GM12878 (cell line): ENCODE measurements at regions of chr10 and their contacts with region 1.

Region 1: GRCh38 chr10:70925377-70926225 is 37.2 kb upstream of the PCBD1 start:
- DNase-seq: no peak
- ATAC-seq: peak; percentile 92
- H3K4me3 ChIP-seq: no peak overlapping the region
- H3K27ac ChIP-seq: no peak overlapping the region
- H3K4me1 ChIP-seq: no peaks in the 10 kb centered on the region
- H3K27me3 ChIP-seq: no peaks in the 10 kb centered on the region; a peak in 3 of 4 replicates
- CTCF ChIP-seq: peak; percentile 86 to 95 (median 95); a peak in 5 of 6 replicates
- EP300 ChIP-seq: no peak
- POLR2A ChIP-seq: no peak
- RAD21 ChIP-seq: peak; percentile 88

Region 2: GRCh38 chr10:69715156-69715898 is 1210.3 kb before region 1 on chr10:
- CTCF ChIA-PET with region 1: no interaction called
- POLR2A ChIA-PET with region 1: no interaction called
- RAD21 ChIA-PET with region 1: no interaction called
- SMC1A ChIA-PET with region 1: no interaction called
- in situ Hi-C with region 1: no loop called
- intact Hi-C with region 1: no loop called
- DNase-seq: no peak
- ATAC-seq: no peak
- H3K4me3 ChIP-seq: no peak overlapping the region
- H3K27ac ChIP-seq: no peak overlapping the region
- H3K4me1 ChIP-seq: no peaks in the 10 kb centered on the region
- H3K27me3 ChIP-seq: no peaks in the 10 kb centered on the region; a peak in 1 of 4 replicates
- CTCF ChIP-seq: no peak
- EP300 ChIP-seq: no peak
- POLR2A ChIP-seq: no peak
- RAD21 ChIP-seq: no peak

Region 3: DNA sequence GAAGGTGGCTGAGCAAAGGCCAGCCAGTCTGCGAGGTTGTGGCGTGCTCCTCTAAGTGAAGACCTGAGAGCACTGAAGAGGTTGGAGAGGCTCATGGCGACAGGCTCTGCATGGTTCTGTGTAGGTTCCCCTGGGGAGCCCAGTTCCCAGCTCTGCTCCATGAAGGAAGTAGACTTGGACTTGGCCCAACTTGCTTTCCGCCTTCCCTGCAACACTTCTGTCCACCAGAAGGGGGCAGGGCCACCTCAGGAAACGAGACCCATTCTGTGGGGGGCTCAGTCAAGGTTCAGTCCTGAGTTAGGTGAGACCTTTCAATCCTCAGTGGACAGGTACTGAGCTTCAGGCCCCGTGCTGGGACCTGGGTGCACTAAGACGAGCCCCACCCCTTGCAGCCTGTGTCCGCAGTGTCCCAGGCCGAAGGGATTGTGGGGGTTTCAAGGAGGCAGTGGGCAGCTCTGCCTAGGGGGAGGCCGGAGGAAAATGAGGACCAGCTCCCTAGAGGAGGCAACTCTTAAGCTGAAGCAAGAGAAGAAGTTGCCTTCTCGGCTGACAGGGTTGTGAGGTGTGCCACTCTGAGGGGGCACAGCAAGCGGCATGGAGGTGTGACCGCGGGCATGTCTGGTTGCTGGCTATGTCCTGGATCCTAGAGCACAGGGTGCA is 22.2 kb before region 1 on chr10:
- CTCF ChIA-PET with region 1: interaction called, 20 read pairs
- POLR2A ChIA-PET with region 1: no interaction called
- RAD21 ChIA-PET with region 1: no interaction called
- SMC1A ChIA-PET with region 1: no interaction called
- in situ Hi-C with region 1: no loop called
- intact Hi-C with region 1: no loop called
- DNase-seq: no peak
- ATAC-seq: peak; percentile 64
- H3K4me3 ChIP-seq: no peak overlapping the region
- H3K27ac ChIP-seq: no peak overlapping the region
- H3K4me1 ChIP-seq: no peaks in the 10 kb centered on the region
- H3K27me3 ChIP-seq: peaks cover 2% of the 10 kb centered on the region in 2 experiments; a peak in 1 of 4 replicates
- CTCF ChIP-seq: peak; percentile 76 to 87 (median 82)
- EP300 ChIP-seq: no peak
- POLR2A ChIP-seq: no peak
- RAD21 ChIP-seq: peak; percentile 78

Region 4: GRCh38 chr10:71045204-71045809 is 119.7 kb after region 1 on chr10:
- CTCF ChIA-PET with region 1: no interaction called
- POLR2A ChIA-PET with region 1: no interaction called
- RAD21 ChIA-PET with region 1: no interaction called
- SMC1A ChIA-PET with region 1: interaction called, 4 read pairs
- in situ Hi-C with region 1: no loop called
- intact Hi-C with region 1: loop called (anchors 10 kb)
- DNase-seq: no peak
- ATAC-seq: peak; percentile 46; the same call in 2 of the 3 replicates
- H3K4me3 ChIP-seq: no peak overlapping the region
- H3K27ac ChIP-seq: no peak overlapping the region
- H3K4me1 ChIP-seq: no peaks in the 10 kb centered on the region
- H3K27me3 ChIP-seq: peaks cover 2 to 10% of the 10 kb centered on the region in 2 experiments; a peak in 3 of 4 replicates
- CTCF ChIP-seq: no peak
- EP300 ChIP-seq: no peak
- POLR2A ChIP-seq: no peak
- RAD21 ChIP-seq: no peak

Region 5: GRCh38 chr10:71205468-71205867 is 279.9 kb after region 1 on chr10:
- CTCF ChIA-PET with region 1: interaction called, 22 read pairs
- POLR2A ChIA-PET with region 1: no interaction called
- RAD21 ChIA-PET with region 1: interaction called, 4 read pairs
- SMC1A ChIA-PET with region 1: interaction called, 7 read pairs
- in situ Hi-C with region 1: loop called (anchors 5 kb)
- intact Hi-C with region 1: loop called (anchors 1 kb)
- DNase-seq: no peak
- ATAC-seq: no peak
- H3K4me3 ChIP-seq: no peak overlapping the region
- H3K27ac ChIP-seq: no peak overlapping the region
- H3K4me1 ChIP-seq: no peaks in the 10 kb centered on the region
- H3K27me3 ChIP-seq: peaks cover 5 to 6% of the 10 kb centered on the region in 2 experiments; a peak in 3 of 4 replicates
- CTCF ChIP-seq: no peak
- EP300 ChIP-seq: no peak
- POLR2A ChIP-seq: no peak
- RAD21 ChIP-seq: no peak

Region 6: GRCh38 chr10:71268247-71268691 is 342.7 kb after region 1 on chr10:
- CTCF ChIA-PET with region 1: no interaction called
- POLR2A ChIA-PET with region 1: no interaction called
- RAD21 ChIA-PET with region 1: no interaction called
- SMC1A ChIA-PET with region 1: no interaction called
- in situ Hi-C with region 1: no loop called
- intact Hi-C with region 1: loop called (anchors 5 kb)
- DNase-seq: no peak
- ATAC-seq: no peak
- H3K4me3 ChIP-seq: no peak overlapping the region
- H3K27ac ChIP-seq: no peak overlapping the region
- H3K4me1 ChIP-seq: no peaks in the 10 kb centered on the region
- H3K27me3 ChIP-seq: peaks cover 0 to 2% of the 10 kb centered on the region in 2 experiments; a peak in 2 of 4 replicates
- CTCF ChIP-seq: 0 out of 6 replicates have a peak, but pooled peaks of 2 of the 3 experiments have one; percentile 3 to 8
- EP300 ChIP-seq: no peak
- POLR2A ChIP-seq: no peak
- RAD21 ChIP-seq: no peak